GM10248 (cell line): ENCODE measurements at regions of chr4 and their contacts with region 1.

Region 1: DNA sequence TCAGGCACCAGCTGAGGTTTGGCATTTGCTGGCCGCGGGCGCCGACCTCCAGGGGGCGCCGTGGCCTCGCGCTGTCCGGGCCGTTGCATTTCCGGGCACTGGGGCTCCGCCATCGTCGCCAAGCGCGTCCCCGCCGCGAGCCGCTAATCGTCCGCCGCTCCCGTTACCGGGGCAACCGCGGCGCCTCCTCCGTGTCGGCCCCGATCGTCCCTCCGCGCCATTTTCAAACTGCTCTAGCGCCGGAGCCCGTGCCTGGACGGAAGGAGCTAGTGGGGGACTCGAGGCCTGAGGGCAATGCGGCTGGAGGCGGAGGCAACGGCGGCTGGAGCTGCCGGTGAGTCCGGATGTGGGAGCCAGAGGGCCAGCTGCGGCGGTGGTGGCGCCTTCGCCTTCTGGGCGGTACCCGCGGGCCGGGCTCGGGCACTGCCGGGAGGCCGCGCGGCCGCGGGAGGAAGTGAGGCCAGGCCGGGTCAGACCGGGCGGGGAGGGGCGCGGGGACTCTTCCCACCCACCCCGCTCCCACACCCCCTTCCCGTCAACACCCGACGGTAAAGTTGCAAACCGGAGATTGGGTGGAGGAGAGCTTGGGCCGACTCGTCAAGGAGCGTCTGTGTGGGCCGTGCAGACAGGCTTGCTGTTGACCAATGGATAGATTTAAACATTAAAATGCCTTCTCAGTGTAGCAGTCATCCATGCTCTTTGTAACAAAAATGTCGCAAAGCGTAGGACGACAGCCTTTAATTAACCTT is at the start of gene CEP135:
- DNase-seq: peak; percentile 92
- CTCF ChIP-seq: peak; percentile 91

Region 2: GRCh38 chr4:55675196-55675793 is 273.6 kb before region 1 on chr4:
- CTCF ChIA-PET with region 1: no interaction called
- POLR2A ChIA-PET with region 1: no interaction called
- DNase-seq: no peak
- CTCF ChIP-seq: no peak

Region 3: GRCh38 chr4:55768291-55768690 is 180.6 kb before region 1 on chr4:
- CTCF ChIA-PET with region 1: no interaction called
- POLR2A ChIA-PET with region 1: no interaction called
- DNase-seq: no peak
- CTCF ChIP-seq: no peak

Region 4: GRCh38 chr4:55931833-55932232 is 17.1 kb before region 1 on chr4:
- CTCF ChIA-PET with region 1: interaction called, 53 read pairs
- POLR2A ChIA-PET with region 1: no interaction called
- DNase-seq: no peak
- CTCF ChIP-seq: no peak

Region 5: DNA sequence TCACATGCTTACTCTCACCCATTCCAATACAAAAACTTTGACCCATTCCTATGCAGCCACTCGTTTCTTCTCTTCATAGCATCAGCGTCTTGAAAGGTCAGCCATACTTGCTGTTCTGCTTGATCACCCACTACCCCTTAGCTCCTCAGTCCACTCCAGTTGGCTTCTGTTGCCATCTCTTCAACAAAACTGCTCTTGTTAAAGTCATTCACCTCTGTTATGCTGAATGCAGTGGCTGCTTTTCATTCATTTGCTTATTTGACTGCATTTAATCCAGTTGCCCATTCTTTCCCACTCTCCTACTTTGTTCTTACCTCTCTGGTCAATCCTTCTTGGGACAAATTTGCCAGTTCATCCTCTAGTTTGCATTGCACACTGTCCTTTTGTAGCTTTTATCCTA is 24.8 kb after region 1 on chr4:
- CTCF ChIA-PET with region 1: interaction called, 17 read pairs
- POLR2A ChIA-PET with region 1: interaction called, 3 read pairs
- DNase-seq: no peak
- CTCF ChIP-seq: no peak

Region 6: DNA sequence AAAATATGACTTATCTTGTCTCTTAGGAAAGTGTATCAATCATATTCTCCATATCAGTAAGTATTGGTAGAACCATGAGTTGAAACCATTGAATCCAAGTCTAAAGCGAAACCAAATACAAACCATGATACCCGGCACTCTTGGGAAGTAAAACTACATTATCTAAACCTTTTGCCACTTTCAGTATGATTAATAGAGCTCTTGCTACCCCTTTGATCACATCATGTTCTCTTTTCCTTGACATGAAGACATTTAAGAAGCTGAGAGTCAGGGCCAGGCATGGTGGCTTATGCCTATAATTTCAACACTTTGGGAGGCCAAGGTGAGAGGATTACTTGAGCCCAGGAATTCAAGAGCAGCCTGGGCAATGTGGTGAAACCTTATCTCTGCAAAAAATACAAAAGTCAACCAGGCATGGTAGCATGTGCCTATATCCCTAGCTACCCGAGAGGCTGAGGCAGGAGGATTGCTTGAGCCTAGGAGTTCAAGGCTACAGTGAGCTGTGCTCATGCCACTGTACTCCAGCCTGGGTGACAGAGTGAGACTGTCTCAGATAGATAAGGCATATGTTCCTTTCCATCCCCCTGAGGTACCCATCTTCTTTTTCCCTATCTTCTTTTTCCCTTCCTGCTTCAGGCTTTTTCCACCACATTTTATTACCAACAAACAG is 45.2 kb after region 1 on chr4:
- CTCF ChIA-PET with region 1: interaction called, 15 read pairs
- POLR2A ChIA-PET with region 1: no interaction called
- DNase-seq: peak; percentile 34
- CTCF ChIP-seq: no peak

Region 7: DNA sequence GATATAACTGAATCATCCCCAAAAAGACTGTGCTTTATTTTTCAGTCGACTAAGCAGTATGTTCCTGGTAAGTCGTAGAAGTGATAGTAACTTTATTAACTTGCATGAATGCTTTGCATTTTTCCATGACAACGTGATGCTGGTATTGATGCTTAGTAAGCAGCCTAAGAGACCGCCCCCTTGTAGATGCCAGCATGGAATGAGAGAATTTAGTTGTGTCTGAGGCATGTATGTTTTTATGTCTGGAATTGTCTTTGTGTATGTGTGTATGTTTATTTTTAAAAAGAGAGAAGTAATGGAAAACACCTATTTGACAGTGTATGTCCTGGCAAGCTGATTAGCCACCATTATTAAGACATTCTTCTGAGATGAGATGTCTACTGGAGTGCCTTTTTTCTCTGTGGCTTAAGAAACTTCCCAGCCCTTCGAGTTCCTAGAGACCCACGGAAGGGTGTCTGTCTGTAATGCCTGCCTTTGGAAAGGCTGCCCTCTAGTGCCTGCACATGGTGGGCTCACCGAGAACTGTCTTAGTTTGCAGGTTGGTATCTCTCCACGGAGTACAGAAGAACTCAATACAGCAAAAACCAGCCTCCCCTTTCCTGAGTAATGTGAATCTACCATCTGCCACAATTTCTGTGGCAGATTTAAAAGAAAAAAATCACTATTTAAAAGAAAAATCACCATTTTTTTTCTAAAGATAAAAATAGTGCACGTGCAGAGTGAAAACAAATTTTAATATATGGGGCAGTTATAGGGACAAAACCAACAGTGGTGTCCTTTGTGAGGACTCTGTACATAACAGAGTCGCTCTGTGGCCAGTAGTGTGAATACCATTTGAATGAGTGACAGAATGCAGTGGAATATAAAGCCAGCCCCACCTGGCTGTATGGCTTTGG is 352.5 kb after region 1 on chr4:
- CTCF ChIA-PET with region 1: interaction called, 16 read pairs
- POLR2A ChIA-PET with region 1: no interaction called
- DNase-seq: peak; percentile 54
- CTCF ChIP-seq: peak; percentile 78